ENCODE measurements at regions of chr16 and their contacts with region 1.

Region 1: DNA sequence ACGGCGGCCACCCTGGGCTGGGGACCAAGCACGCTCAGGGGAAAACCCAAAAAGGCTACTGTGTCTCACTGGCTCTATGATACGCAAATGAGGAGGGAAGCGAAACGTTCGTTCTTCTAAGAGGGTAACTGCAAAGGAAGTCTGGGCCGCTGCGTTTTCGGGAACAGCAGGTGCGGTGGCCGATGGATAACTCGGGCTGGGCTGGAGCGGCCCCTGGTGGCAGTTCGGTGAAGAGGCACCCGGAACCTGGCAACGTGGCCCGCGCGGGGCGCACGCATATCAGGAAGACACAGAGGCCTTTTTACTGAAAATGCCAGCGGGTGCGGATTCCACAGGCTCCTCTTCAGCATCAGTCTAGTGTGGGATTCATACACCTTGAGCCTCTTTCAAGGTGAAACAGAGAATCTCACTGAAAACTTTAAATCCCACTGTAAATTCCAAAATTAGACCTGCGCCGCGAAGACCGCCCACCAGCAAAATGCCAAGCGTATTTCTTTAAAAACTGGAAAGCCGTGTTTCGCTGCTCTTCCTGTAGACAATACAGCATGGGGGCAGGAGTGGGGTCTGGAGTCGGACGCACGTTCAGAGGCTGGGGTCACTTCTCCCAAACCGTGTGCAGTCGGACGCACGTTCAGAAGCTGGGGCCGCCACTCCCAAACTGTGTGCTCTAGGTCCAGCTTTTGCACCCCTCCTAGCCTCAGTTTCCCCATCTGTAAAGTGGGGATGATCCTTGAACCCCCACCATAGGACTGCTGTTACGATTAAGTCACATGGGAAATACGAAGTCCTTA is 44.4 kb upstream of the METTL9 start:
- DNase-seq: peak; percentile 74 to 75
- ATAC-seq: peak; percentile 87 to 93
- H3K4me3 ChIP-seq: no peak overlapping the region
- H3K27ac ChIP-seq: peak overlapping the region; percentile 55 to 74; a peak in 4 of 6 replicates
- H3K4me1 ChIP-seq: 0 out of 3 replicates have a peak, but pooled peaks cover 2% of the 10 kb centered on the region
- CTCF ChIP-seq: peak; percentile 78
- EP300 ChIP-seq: no peak
- POLR2A ChIP-seq: no peak
- RAD21 ChIP-seq: peak; percentile 96

Region 2: GRCh38 chr16:21565861-21566669 is 11.1 kb after region 1 on chr16:
- CTCF ChIA-PET with region 1: interaction called, 10 read pairs
- POLR2A ChIA-PET with region 1: no interaction called
- DNase-seq: no peak
- ATAC-seq: no peak
- H3K4me3 ChIP-seq: no peak overlapping the region
- H3K27ac ChIP-seq: no peak overlapping the region
- H3K4me1 ChIP-seq: no peaks in the 10 kb centered on the region; the same call in 2 of the 3 replicates
- CTCF ChIP-seq: no peak
- EP300 ChIP-seq: no peak
- POLR2A ChIP-seq: no peak
- RAD21 ChIP-seq: no peak

Region 3: GRCh38 chr16:21580807-21581206 is 25.8 kb after region 1 on chr16:
- CTCF ChIA-PET with region 1: no interaction called
- POLR2A ChIA-PET with region 1: no interaction called
- DNase-seq: no peak
- ATAC-seq: no peak
- H3K4me3 ChIP-seq: no peak overlapping the region
- H3K27ac ChIP-seq: no peak overlapping the region
- H3K4me1 ChIP-seq: no peaks in the 10 kb centered on the region
- CTCF ChIP-seq: no peak
- EP300 ChIP-seq: no peak
- POLR2A ChIP-seq: no peak
- RAD21 ChIP-seq: no peak

Region 4: DNA sequence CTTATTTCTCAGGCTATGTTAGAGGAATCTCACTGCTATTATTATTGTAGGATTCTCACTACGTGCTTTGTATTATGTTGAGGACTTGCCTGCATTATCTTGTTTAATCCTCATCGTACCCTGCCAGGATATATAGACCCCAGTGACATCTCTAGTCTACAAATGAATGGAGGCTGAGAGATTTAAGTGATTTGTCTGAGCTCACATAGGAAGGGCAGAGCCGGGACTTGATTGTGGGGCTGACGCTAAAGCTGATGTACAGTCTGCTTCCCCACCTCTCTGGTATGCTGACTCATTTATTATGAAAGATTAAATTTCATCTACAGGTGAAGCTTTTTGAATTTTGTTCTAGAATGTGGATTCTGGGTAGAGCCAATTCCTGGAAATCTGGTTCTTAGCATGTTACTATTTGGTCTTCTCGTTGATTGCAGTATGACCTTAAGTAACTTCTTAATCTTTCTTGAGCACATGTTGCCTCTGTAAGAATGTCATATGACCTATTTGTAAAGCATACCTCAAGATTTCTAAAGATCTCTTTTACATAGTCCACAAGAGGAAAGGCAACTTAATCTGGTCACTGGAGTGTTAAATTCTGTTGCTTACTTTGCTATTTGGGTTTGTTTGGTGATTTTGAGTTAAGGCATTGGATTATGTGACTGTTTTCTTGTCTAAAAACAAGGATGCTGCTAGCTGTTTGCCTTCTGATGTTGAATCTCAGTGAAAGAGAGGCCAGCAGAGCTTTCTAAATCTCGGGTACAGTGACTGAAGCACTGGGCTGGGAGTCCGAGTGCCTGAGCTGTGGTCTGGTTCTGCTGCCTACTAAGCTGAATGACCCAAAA is 56.8 kb after region 1 on chr16:
- CTCF ChIA-PET with region 1: no interaction called
- POLR2A ChIA-PET with region 1: no interaction called
- DNase-seq: no peak
- ATAC-seq: no peak
- H3K4me3 ChIP-seq: no peak overlapping the region
- H3K27ac ChIP-seq: peak overlapping the region in 1 of 2 experiments; percentile 37; a peak in 1 of 6 replicates
- H3K4me1 ChIP-seq: peaks cover 20% of the 10 kb centered on the region
- CTCF ChIP-seq: no peak
- EP300 ChIP-seq: no peak
- POLR2A ChIP-seq: no peak
- RAD21 ChIP-seq: no peak

Measured in A549 (cell line).